ENCODE measurements at regions of chr11 and their contacts with region 1.

Region 1: GRCh38 chr11:64000026-64000739 is 13.9 kb downstream of the OTUB1 start:
- DNase-seq: peak in 3 of 6 donors; percentile 65 to 85 (median 70)
- ATAC-seq: peak; percentile 62 to 85 (median 82)
- H3K4me3 ChIP-seq: peak overlapping the region in 1 of 4 donors; percentile 27
- H3K27ac ChIP-seq: no peak overlapping the region
- H3K4me1 ChIP-seq: peaks cover 0 to 5% (median 2%) of the 10 kb centered on the region in 3 donors
- H3K27me3 ChIP-seq: no peaks in the 10 kb centered on the region
- CTCF ChIP-seq: peak; percentile 37 to 76 (median 63)

Region 2: GRCh38 chr11:64060861-64061444 is 60.8 kb after region 1 on chr11:
- intact Hi-C with region 1: loop called in 1 of 3 experiments (anchors 10 kb)
- DNase-seq: peak in 2 of 6 donors; percentile 62 to 71
- ATAC-seq: peak in 3 of 4 donors; percentile 42 to 57 (median 50)
- H3K4me3 ChIP-seq: peak overlapping the region in 2 of 4 donors; percentile 5 to 27
- H3K27ac ChIP-seq: no peak overlapping the region
- H3K4me1 ChIP-seq: no peaks in the 10 kb centered on the region
- H3K27me3 ChIP-seq: no peaks in the 10 kb centered on the region
- CTCF ChIP-seq: no peak

Region 3: GRCh38 chr11:64152841-64153691 is 152.9 kb after region 1 on chr11:
- intact Hi-C with region 1: loop called in 2 of 3 experiments (anchors 5 kb)
- DNase-seq: peak; percentile 38 to 90 (median 74)
- ATAC-seq: peak; percentile 65 to 87 (median 80)
- H3K4me3 ChIP-seq: no peak overlapping the region
- H3K27ac ChIP-seq: no peak overlapping the region
- H3K4me1 ChIP-seq: peaks cover 14 to 19% (median 14%) of the 10 kb centered on the region in 3 donors
- H3K27me3 ChIP-seq: no peaks in the 10 kb centered on the region
- CTCF ChIP-seq: peak; percentile 98 to 100 (median 99)

Region 4: DNA sequence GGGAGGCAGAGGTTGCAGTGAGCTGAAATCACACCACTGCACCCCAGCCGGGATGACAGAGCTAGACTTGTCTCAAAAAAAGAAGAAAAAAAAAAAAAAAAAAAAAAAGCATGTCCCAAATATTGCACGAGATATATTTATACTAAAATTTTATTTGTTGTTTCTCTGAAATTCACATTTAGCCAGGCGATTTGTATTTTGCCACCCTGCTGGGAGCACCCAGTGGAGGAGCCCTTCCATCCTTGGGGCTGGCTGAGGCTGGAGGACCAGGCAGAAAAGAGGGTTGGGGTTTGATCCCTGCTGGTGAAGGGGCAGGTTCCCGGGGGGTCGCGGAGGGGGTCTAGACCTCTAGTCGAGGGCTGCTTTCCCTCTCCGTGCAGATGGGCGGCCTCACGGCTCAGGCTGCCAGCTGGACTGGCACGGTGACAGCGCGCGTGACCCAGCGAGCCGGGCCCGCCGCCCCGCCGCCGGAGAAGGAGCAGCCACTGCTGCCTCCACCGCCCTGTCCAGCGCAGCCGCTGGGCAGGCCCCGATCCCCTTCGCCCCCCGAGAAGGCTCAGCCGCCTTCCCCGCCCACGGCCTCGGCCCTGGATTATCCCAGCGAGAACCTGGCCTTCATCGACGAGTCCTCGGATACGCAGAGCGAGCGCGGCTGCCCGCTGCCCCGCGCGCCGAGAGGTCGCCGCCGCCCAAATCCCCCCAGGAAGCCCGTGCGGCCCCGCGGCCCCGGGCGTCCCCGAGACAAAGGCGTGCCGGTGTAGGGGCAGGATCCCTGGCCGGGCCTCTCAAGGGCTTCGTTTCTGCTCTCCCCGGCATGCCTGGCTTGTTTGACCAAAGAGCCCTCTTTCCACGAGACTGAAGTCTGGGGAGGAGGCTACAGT is 299.0 kb after region 1 on chr11:
- intact Hi-C with region 1: loop called in 1 of 3 experiments (anchors 10 kb)
- DNase-seq: peak; percentile 59 to 89 (median 72)
- ATAC-seq: peak; percentile 46 to 65 (median 56)
- H3K4me3 ChIP-seq: peak overlapping the region; percentile 14 to 46 (median 30)
- H3K27ac ChIP-seq: no peak overlapping the region
- H3K4me1 ChIP-seq: peaks cover 10 to 24% (median 11%) of the 10 kb centered on the region in 3 donors
- H3K27me3 ChIP-seq: peaks cover 0 to 21% (median 9%) of the 10 kb centered on the region in 4 donors
- CTCF ChIP-seq: no peak